Calu3 (cell line): ENCODE measurements at regions of chr5 and their contacts with region 1.

Region 1: GRCh38 chr5:41924872-41925554 is at the start of gene FBXO4:
- DNase-seq: peak; percentile 81
- H3K4me3 Mint-ChIP-seq: peak within 1 kb of the TSS; percentile 83
- H3K27ac Mint-ChIP-seq: peak within 1 kb of the TSS; percentile 99
- H3K4me1 Mint-ChIP-seq: peaks cover 22% of the 10 kb centered on the region
- H3K27me3 Mint-ChIP-seq: no peaks in the 10 kb centered on the region
- CTCF ChIP-seq: peak; percentile 47
- total RNA-seq, gene FBXO4: 5.4 and 8.9 TPM in 2 replicates

Region 2: GRCh38 chr5:41856644-41857491 is 68.1 kb before region 1 on chr5:
- CTCF ChIA-PET with region 1: interaction called, 6 read pairs
- intact Hi-C with region 1: loop called (anchors 1 kb)
- DNase-seq: peak; percentile 60
- H3K4me3 Mint-ChIP-seq: no peak overlapping the region
- H3K27ac Mint-ChIP-seq: no peak overlapping the region
- H3K4me1 Mint-ChIP-seq: no peaks in the 10 kb centered on the region
- H3K27me3 Mint-ChIP-seq: no peaks in the 10 kb centered on the region
- CTCF ChIP-seq: peak; percentile 46

Region 3: GRCh38 chr5:41903892-41904799 is 20.9 kb before region 1 on chr5 and contains the start of gene RIMOC1:
- CTCF ChIA-PET with region 1: interaction called, 7 read pairs
- intact Hi-C with region 1: loop called (anchors 2 kb)
- DNase-seq: peak; percentile 98
- H3K4me3 Mint-ChIP-seq: peak within 1 kb of the TSS; percentile 88
- H3K27ac Mint-ChIP-seq: peak within 1 kb of the TSS; percentile 99
- H3K4me1 Mint-ChIP-seq: peaks cover 20% of the 10 kb centered on the region
- H3K27me3 Mint-ChIP-seq: no peaks in the 10 kb centered on the region
- CTCF ChIP-seq: no peak
- total RNA-seq, gene RIMOC1: 27.6 and 28.5 TPM in 2 replicates